ENCODE measurements at regions of chr16 and their contacts with region 1.

Region 1: DNA sequence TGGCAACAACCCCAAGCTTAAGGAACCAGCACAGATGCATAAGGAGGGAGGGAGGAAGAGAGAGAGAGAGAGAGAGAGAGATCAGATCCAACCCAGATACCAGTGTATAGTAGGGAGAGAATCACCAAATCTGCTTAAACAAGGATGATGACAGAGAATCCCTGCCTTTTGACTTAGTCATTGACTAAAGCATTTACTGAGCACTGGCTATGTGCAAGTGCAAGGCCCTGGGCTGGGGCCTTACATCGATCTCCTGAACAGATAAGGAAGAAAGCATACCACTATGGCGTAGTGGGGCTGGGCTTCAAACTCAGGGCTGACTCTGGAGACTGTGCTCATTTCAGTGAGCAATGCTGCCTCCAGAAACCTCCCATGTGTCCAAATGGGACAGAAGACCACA is 15.8 kb downstream of the TSNAXIP1 start:
- DNase-seq: no peak
- H3K4me3 ChIP-seq: no peak overlapping the region
- CTCF ChIP-seq: no peak

Region 2: GRCh38 chr16:67719048-67719777 is 103.3 kb before region 1 on chr16 and contains the start of gene GFOD2:
- in situ Hi-C with region 1: loop called (anchors 5 kb)
- DNase-seq: peak; percentile 83
- H3K4me3 ChIP-seq: peak within 1 kb of the TSS; percentile 70
- CTCF ChIP-seq: no peak

Region 3: GRCh38 chr16:67862623-67863583 is 40.4 kb after region 1 on chr16:
- in situ Hi-C with region 1: loop called (anchors 5 kb)
- DNase-seq: no peak
- H3K4me3 ChIP-seq: no peak overlapping the region
- CTCF ChIP-seq: no peak

Region 4: DNA sequence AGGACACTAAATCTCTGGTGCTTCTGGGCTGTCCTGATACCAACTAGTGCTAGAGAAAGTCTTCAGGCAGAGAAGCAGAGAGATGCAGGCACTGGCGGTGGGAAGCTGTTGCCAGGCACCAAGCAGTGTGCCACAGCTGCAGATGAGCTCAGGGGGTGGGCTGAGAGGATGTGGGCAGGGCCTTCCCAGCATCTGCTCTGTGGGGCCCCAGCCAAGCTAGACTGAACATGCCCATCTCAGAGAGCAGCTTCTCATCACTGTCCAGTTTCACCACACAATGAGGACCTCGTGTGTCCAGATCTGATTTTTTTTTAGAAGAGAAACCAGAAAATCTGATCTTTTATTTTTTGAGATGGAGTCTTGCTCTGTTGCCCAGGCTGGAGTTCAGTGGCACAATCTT is 87.6 kb after region 1 on chr16:
- in situ Hi-C with region 1: loop called (anchors 5 kb)
- DNase-seq: no peak
- H3K4me3 ChIP-seq: no peak overlapping the region
- CTCF ChIP-seq: no peak

Region 5: DNA sequence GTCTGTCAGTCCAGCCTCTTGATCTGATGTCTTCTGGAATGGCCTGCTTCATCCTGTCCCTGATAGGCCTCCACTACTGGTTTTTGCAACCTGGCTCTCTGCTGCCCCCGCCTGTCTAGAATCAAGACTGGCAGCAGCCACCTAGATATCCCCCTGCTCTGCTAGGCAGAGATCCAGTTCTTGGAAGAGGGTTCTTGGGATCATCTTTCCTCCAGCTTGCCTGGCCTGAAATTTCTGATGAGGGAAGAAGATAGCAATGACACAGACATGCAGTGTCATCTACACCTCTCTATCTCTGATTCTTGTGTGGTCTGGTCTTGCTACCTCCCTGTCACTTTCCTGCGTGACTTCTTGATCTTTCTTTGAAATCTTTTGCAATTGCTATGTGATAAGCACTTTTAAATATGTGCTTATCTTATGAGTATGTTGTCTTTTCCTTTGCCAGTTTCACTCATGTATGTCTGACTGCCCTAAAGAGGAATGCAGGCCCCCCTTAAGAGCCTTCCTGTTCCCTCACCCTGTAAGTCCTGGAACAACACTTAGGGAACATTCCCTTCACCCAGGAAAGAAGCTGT is 242.4 kb after region 1 on chr16:
- in situ Hi-C with region 1: no loop called
- DNase-seq: peak; percentile 39
- H3K4me3 ChIP-seq: no peak overlapping the region
- CTCF ChIP-seq: peak; percentile 87